Activated CD4-positive, alpha-beta T cell treated with anti-CD3 and anti-CD28 coated beads for 36 hours (primary cell): ENCODE measurements at regions of chr3 and their contacts with region 1.

Region 1: GRCh38 chr3:12891985-12892839 is 50.8 kb upstream of the RPL32 start:
- DNase-seq: peak; percentile 64
- ATAC-seq: peak; percentile 58
- H3K4me3 Mint-ChIP-seq: no peak overlapping the region
- H3K27ac Mint-ChIP-seq: no peak overlapping the region
- H3K4me1 Mint-ChIP-seq: peaks cover 9% of the 10 kb centered on the region
- H3K27me3 Mint-ChIP-seq: peaks cover 12% of the 10 kb centered on the region

Region 2: DNA sequence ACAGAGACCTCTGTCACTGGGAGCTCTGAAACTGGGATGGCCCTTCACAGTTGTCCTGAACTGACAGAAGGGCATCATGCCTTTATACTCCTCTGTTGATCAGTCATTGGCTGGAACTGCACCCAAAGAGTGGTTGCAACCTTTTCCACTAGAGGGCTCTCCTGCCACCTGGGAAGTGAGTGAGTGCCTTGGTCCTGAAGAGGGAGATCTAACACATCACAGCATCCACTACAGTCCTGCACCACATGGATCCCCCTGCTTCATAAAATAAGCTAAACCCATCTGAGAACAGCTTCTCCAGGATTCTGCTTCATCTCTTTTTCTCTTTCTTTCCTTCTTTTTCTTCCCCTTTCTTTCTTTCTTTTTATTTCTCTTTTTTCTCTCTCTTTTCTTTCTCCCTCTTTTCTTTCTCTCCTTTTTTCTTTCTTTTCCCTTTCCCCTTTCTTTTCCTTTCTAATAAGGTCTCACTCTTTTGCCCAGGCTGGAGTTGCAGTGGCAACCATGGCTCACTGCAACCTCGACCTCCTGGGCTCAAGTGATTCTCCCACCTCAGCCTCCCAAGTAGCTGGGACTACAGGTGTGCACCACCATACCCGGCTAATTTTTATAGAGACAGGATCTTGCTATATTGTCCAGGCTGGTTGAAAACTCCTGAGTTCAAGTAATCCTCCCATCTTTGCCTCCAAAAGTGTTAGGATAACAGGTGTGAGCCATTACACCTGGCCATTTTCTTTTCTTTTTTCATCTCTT is 185.5 kb before region 1 on chr3:
- CTCF ChIA-PET with region 1: no interaction called
- POLR2A ChIA-PET with region 1: no interaction called
- intact Hi-C with region 1: loop called in 1 of 2 experiments (anchors 1 kb)
- DNase-seq: peak; percentile 79
- ATAC-seq: peak; percentile 100
- H3K4me3 Mint-ChIP-seq: no peak overlapping the region
- H3K27ac Mint-ChIP-seq: no peak overlapping the region
- H3K4me1 Mint-ChIP-seq: no peaks in the 10 kb centered on the region
- H3K27me3 Mint-ChIP-seq: no peaks in the 10 kb centered on the region

Region 3: GRCh38 chr3:12841149-12841970 is 50.9 kb before region 1 on chr3 and contains the start of gene RPL32:
- CTCF ChIA-PET with region 1: interaction called, 8 read pairs
- POLR2A ChIA-PET with region 1: interaction called, 3 read pairs
- intact Hi-C with region 1: loop called (anchors 2 kb)
- DNase-seq: peak; percentile 92
- ATAC-seq: peak; percentile 90
- H3K4me3 Mint-ChIP-seq: peak within 1 kb of the TSS; percentile 98
- H3K27ac Mint-ChIP-seq: peak within 1 kb of the TSS; percentile 99
- H3K4me1 Mint-ChIP-seq: peaks cover 43% of the 10 kb centered on the region
- H3K27me3 Mint-ChIP-seq: no peaks in the 10 kb centered on the region
- total RNA-seq, gene RPL32: 2,842 to 4,727 TPM

Region 4: GRCh38 chr3:12879191-12879815 is 12.9 kb before region 1 on chr3:
- CTCF ChIA-PET with region 1: interaction called, 16 read pairs
- POLR2A ChIA-PET with region 1: no interaction called
- intact Hi-C with region 1: no loop called
- DNase-seq: no peak
- ATAC-seq: no peak
- H3K4me3 Mint-ChIP-seq: no peak overlapping the region
- H3K27ac Mint-ChIP-seq: no peak overlapping the region
- H3K4me1 Mint-ChIP-seq: no peaks in the 10 kb centered on the region
- H3K27me3 Mint-ChIP-seq: peaks cover 9% of the 10 kb centered on the region

Region 5: GRCh38 chr3:12938258-12938711 is 46.1 kb after region 1 on chr3:
- CTCF ChIA-PET with region 1: no interaction called
- POLR2A ChIA-PET with region 1: no interaction called
- intact Hi-C with region 1: no loop called
- DNase-seq: no peak
- ATAC-seq: no peak
- H3K4me3 Mint-ChIP-seq: no peak overlapping the region
- H3K27ac Mint-ChIP-seq: no peak overlapping the region
- H3K4me1 Mint-ChIP-seq: no peaks in the 10 kb centered on the region
- H3K27me3 Mint-ChIP-seq: no peaks in the 10 kb centered on the region